ENCODE measurements at regions of chr7 and their contacts with region 1.

Region 1: GRCh38 chr7:6106140-6106904 is 75.1 kb downstream of the ANKRD61 start:
- DNase-seq: peak; percentile 28
- H3K4me3 Mint-ChIP-seq: peak overlapping the region; percentile 86
- H3K27ac Mint-ChIP-seq: peak overlapping the region; percentile 80
- H3K4me1 Mint-ChIP-seq: peaks cover 20% of the 10 kb centered on the region
- H3K27me3 Mint-ChIP-seq: no peaks in the 10 kb centered on the region

Region 2: DNA sequence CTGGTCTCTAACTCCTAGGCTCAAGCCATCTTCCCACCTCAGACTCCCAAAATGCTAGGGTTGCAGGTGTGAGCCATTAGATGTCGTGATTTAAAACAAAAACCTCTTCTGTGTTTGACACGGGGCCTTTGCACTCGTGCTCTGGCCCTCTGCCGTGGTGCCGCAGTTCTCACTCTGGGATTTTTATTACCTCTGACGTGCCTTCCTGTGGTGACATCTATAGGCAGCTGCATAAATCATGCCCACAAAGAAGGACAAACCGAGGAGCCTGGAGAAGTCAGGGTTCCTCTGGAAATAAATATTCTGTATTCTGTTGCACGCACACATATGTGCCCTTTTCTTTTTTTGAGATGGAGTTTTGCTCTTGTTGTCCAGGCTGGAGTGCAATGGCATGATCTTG is 251.6 kb before region 1 on chr7:
- intact Hi-C with region 1: loop called (anchors 2 kb)
- DNase-seq: no peak
- H3K4me3 Mint-ChIP-seq: no peak overlapping the region
- H3K27ac Mint-ChIP-seq: no peak overlapping the region
- H3K4me1 Mint-ChIP-seq: peaks cover 6% of the 10 kb centered on the region
- H3K27me3 Mint-ChIP-seq: no peaks in the 10 kb centered on the region

Region 3: GRCh38 chr7:5997222-5997808 is 109.0 kb before region 1 on chr7:
- intact Hi-C with region 1: loop called (anchors 1 kb)
- DNase-seq: no peak
- H3K4me3 Mint-ChIP-seq: no peak overlapping the region
- H3K27ac Mint-ChIP-seq: no peak overlapping the region
- H3K4me1 Mint-ChIP-seq: no peaks in the 10 kb centered on the region
- H3K27me3 Mint-ChIP-seq: no peaks in the 10 kb centered on the region

Region 4: DNA sequence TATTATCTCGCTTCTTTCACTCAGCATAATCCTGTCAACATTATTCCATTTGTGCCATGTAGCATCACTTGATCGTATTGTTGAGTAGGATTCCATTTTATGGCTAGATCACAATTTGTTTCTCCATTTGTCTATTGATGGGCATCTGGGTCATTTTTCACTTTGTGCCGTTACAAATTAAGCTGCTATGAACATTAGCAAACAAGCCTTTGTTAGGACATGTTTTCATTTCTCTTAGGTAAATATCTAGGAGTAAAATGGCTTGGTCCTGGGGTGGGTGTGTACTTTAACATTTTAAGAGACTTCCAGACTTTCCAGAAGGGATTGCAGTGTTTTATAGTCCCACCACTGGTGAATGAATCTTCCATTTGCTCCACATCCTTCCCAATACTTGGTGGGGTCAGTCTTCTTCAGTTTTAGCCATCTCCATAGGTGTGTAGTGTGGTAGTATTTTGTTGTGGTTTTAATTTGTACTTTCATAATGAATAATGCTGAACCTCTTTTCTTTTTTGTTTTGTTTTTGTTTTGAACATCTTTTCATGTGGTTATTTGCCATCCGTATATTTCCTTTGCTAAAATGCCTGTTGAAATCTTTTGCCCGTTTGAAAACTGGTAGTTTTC is 11.1 kb after region 1 on chr7:
- intact Hi-C with region 1: loop called (anchors 1 kb)
- DNase-seq: no peak
- H3K4me3 Mint-ChIP-seq: peak overlapping the region; percentile 31
- H3K27ac Mint-ChIP-seq: peak overlapping the region; percentile 66
- H3K4me1 Mint-ChIP-seq: peaks cover 27% of the 10 kb centered on the region
- H3K27me3 Mint-ChIP-seq: no peaks in the 10 kb centered on the region

Measured in activated T-helper 1 cell treated with anti-CD3 and anti-CD28 coated beads, Interleukin-12 subunit alpha, Interleukin-12 subunit beta, Interleukin-2, Interleukin-4 antibody, amounts not matched to agents 30 ng/mL and 10 ng/mL and 1 ng/mL, durations not matched to agents 14 hours and 24 hours and 36 hours (primary cell).